ENCODE measurements at regions of chr20 and their contacts with region 1.

Region 1: GRCh38 chr20:34825530-34826362 is at the start of gene NCOA6:
- DNase-seq: peak in 1 of 2 experiments; percentile 81
- H3K4me3 ChIP-seq: peak within 1 kb of the TSS; percentile 98
- H3K27ac ChIP-seq: peak within 1 kb of the TSS; percentile 54
- H3K4me1 ChIP-seq: peaks cover 24% of the 10 kb centered on the region
- H3K27me3 ChIP-seq: no peaks in the 10 kb centered on the region
- CTCF ChIP-seq: no peak
- total RNA-seq, gene NCOA6: 26.7 and 35.1 TPM in 2 replicates

Region 2: DNA sequence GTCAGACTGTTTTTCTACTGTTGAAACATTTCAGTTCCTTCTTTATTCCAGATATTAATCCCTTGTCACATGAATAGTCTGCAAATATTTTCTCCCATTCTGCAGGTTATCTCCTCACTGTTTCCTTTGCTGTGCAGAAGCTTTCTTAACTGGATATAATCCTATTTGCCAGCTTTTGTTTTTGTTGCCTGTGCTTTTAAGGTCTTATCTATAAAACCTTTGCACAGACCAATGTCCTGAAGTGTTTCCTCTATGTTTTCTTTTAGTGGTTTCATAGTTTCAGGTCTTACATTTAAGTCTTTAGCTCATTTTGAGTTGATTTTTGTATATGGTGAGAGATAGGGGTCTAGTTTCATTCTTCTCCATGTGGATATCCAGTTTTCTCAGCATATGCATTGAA is 19.5 kb before region 1 on chr20:
- CTCF ChIA-PET with region 1: no interaction called
- POLR2A ChIA-PET with region 1: no interaction called
- intact Hi-C with region 1: no loop called
- DNase-seq: no peak
- H3K4me3 ChIP-seq: no peak overlapping the region
- H3K27ac ChIP-seq: no peak overlapping the region
- H3K4me1 ChIP-seq: no peaks in the 10 kb centered on the region
- H3K27me3 ChIP-seq: no peaks in the 10 kb centered on the region
- CTCF ChIP-seq: no peak

Region 3: DNA sequence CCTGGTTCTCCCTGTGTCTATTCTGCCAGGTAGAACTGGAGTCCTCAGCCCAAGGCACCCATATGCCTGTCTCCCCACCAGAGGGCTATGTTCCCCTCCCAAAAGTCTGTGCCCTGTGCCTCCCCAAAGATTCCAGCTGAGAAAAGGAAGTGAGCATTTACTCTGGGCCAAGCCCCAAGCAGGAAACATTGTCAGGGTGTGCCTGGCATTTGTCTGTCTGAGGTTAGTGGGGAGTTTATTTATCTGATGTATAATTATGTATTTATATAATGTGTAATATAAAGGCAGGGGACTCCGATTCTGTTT is 606.6 kb after region 1 on chr20:
- CTCF ChIA-PET with region 1: interaction called, 11 read pairs
- POLR2A ChIA-PET with region 1: no interaction called
- intact Hi-C with region 1: no loop called
- DNase-seq: no peak
- H3K4me3 ChIP-seq: no peak overlapping the region
- H3K27ac ChIP-seq: no peak overlapping the region
- H3K4me1 ChIP-seq: no peaks in the 10 kb centered on the region
- H3K27me3 ChIP-seq: no peaks in the 10 kb centered on the region
- CTCF ChIP-seq: no peak

Measured in PC-9 (cell line).